ENCODE measurements at regions of chr2 and their contacts with region 1.

Region 1: GRCh38 chr2:37389989-37390765 is 45.7 kb downstream of the QPCT start:
- DNase-seq: peak; percentile 94
- ATAC-seq: peak; percentile 96
- H3K4me3 ChIP-seq: peak overlapping the region; percentile 19; the same call in 1 of the 2 replicates
- H3K27ac ChIP-seq: peak overlapping the region; percentile 63
- H3K4me1 ChIP-seq: peaks cover 30% of the 10 kb centered on the region
- H3K27me3 ChIP-seq: no peaks in the 10 kb centered on the region
- CTCF ChIP-seq: no peak
- EP300 ChIP-seq: peak; percentile 58 to 90; a peak in 3 of 4 replicates
- POLR2A ChIP-seq: no peak
- RAD21 ChIP-seq: peak; percentile 9; the same call in 1 of the 2 replicates

Region 2: DNA sequence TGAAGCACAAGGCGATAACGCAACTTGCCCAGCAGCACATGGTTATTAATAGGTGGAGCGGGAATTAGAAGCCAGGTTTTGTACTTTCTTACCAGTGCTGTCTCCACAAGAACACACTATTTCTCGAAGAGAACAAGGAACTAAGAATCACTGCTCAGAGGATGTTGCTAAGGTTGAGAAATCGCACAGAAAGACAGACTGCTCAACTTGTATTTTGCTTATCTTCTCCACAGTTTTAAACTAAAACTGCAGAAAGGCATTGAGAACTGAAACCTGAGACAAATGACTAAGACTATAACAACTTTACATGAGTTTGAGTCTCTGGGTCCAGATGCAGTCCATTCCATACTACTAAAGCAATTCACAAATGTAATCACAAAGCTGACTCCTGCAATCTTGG is 71.8 kb before region 1 on chr2:
- CTCF ChIA-PET with region 1: interaction called, 8 read pairs
- POLR2A ChIA-PET with region 1: no interaction called
- RAD21 ChIA-PET with region 1: interaction called, 9 read pairs
- SMC1A ChIA-PET with region 1: no interaction called
- in situ Hi-C with region 1: no loop called
- intact Hi-C with region 1: loop called (anchors 5 kb)
- DNase-seq: peak; percentile 53
- ATAC-seq: peak; percentile 80
- H3K4me3 ChIP-seq: peak overlapping the region; percentile 26; the same call in 1 of the 2 replicates
- H3K27ac ChIP-seq: peak overlapping the region; percentile 20; the same call in 1 of the 2 replicates
- H3K4me1 ChIP-seq: peaks cover 5% of the 10 kb centered on the region; the same call in 1 of the 2 replicates
- H3K27me3 ChIP-seq: no peaks in the 10 kb centered on the region
- CTCF ChIP-seq: no peak
- EP300 ChIP-seq: no peak
- POLR2A ChIP-seq: no peak
- RAD21 ChIP-seq: no peak

Region 3: DNA sequence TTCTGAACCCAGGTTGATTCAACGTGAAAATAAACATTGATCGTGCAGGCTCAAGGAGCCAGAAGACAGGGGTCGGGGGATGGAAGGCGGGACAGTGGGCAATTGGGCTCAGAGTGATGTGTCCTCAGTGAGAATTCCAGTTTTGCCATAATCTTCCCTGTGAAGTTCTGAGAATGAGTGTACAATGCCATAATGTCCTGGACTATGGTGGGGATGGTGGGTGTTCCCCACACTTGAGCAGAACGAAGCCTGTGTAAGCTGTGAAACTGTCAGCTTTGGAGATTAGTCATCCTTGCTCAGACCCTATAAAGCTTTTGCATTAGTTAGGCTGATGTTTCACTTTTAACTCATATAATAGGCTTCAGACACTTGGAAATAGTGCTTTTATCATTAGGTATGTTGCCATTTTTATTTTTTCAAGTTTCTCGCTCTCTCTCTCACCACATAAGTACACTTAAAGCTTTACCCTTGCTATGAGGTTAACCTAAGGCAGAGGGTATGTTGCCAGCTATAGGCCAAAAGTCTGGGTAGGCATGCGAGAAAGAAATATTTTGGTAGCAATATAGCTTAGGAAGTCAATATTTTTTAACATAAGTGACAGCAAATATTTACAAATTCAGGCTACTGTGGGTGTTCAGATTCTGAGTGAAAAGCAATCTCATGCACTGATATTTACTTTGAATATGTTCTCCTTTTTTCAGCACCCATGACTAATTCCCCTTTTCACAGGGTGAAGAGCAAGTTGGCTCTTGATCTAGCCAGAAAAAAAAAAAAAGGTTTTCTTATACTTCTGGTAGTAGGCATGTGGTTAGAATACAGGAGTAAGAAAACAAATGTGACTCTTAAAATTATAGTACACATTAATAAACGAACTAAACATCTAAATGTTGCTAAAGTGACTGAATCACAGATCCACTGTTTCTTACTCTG is 234.1 kb after region 1 on chr2:
- CTCF ChIA-PET with region 1: interaction called, 17 read pairs
- POLR2A ChIA-PET with region 1: no interaction called
- RAD21 ChIA-PET with region 1: no interaction called
- SMC1A ChIA-PET with region 1: interaction called, 5 read pairs
- in situ Hi-C with region 1: no loop called
- intact Hi-C with region 1: no loop called
- DNase-seq: peak; percentile 93
- ATAC-seq: peak; percentile 79
- H3K4me3 ChIP-seq: peak overlapping the region; percentile 24; the same call in 1 of the 2 replicates
- H3K27ac ChIP-seq: peak overlapping the region; percentile 97
- H3K4me1 ChIP-seq: peaks cover 54% of the 10 kb centered on the region
- H3K27me3 ChIP-seq: no peaks in the 10 kb centered on the region
- CTCF ChIP-seq: no peak
- EP300 ChIP-seq: peak; percentile 56 to 80
- POLR2A ChIP-seq: no peak
- RAD21 ChIP-seq: peak; percentile 1; the same call in 1 of the 2 replicates

Region 4: DNA sequence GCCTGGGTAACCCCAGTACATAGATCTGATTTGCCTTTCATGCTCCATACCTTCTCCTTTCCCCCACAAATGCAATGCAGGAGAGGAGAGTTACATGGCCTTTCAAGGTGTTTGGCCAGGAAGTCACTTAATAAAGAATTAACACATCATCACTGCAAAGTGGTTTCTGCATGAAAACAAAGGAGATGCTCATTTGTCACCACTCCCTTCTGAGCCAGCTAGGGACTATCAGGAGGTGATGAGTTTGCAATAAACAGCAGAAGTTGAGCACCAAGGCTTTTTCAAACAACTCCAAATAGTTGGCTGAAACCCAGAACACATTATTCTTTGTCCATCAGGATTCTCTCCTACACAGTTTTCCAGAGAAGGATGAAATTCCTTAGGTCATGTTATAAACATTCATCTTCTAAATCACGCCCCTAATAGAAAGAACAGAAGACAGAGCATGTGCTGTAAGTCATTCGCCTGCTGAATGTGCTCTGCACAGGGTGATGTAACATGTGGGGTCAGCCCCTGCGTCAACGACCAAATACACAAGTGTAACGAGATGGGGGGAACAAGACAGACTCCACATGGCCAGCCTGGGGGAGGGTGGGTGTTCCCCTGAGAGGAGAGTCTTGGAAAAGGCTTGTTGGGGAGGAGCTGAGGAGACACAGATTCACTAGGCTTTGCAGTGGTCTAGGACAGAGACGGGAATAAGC is 447.6 kb after region 1 on chr2:
- CTCF ChIA-PET with region 1: interaction called, 104 read pairs
- POLR2A ChIA-PET with region 1: no interaction called
- RAD21 ChIA-PET with region 1: interaction called, 78 read pairs
- SMC1A ChIA-PET with region 1: interaction called, 163 read pairs
- in situ Hi-C with region 1: no loop called
- intact Hi-C with region 1: no loop called
- DNase-seq: no peak
- ATAC-seq: no peak
- H3K4me3 ChIP-seq: no peak overlapping the region
- H3K27ac ChIP-seq: no peak overlapping the region
- H3K4me1 ChIP-seq: peaks cover 4% of the 10 kb centered on the region; the same call in 1 of the 2 replicates
- H3K27me3 ChIP-seq: no peaks in the 10 kb centered on the region
- CTCF ChIP-seq: no peak
- EP300 ChIP-seq: no peak
- POLR2A ChIP-seq: no peak
- RAD21 ChIP-seq: no peak

Region 5: DNA sequence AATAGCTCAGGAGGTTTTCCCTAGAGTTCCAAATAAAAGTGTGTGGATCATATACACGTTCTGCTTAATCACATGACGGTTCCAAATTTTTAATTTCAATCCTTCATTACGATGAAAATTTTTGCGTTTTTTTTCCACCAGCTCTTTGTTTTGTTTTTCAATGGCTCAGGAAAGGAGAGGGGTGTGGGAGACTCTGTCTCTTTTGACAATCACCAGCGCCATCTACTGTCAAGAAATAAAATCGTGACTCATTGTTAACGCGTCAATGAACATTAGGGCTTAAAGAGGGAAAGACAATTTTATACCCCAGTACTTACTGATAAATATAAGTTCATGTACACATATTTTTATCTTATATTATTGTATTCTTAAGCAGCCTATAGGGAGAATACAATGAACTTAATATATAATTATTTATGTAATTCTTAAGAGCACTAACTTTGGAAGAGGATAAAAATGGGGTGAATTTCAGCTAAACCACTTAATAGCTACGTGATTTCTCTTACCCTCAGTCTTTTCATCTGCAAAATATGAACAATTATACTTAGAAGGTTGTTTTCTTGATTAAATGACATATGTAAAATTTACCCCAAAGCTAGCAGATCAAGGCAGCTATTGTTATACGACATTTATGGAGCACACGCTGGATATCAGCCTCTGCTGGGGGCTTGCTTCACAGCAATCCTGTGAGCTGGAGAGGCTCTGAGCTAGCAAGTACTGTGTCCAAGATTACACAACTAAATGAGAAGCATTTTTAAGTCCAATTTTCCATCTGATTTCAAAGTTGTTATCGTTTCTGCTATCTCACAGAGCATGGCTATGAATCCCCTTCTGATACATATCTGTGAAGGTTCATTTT is 487.5 kb after region 1 on chr2:
- CTCF ChIA-PET with region 1: interaction called, 267 read pairs
- POLR2A ChIA-PET with region 1: no interaction called
- RAD21 ChIA-PET with region 1: interaction called, 156 read pairs
- SMC1A ChIA-PET with region 1: interaction called, 211 read pairs
- in situ Hi-C with region 1: loop called (anchors 5 kb)
- intact Hi-C with region 1: no loop called
- DNase-seq: no peak
- ATAC-seq: peak; percentile 77
- H3K4me3 ChIP-seq: no peak overlapping the region
- H3K27ac ChIP-seq: no peak overlapping the region
- H3K4me1 ChIP-seq: peaks cover 8% of the 10 kb centered on the region
- H3K27me3 ChIP-seq: peaks cover 0 to 2% of the 10 kb centered on the region in 2 experiments; a peak in 2 of 4 replicates
- CTCF ChIP-seq: peak; percentile 44 to 64 (median 63); a peak in 5 of 6 replicates
- EP300 ChIP-seq: no peak
- POLR2A ChIP-seq: no peak
- RAD21 ChIP-seq: peak; percentile 91

Region 6: GRCh38 chr2:38115216-38116032 is 725.2 kb after region 1 on chr2:
- CTCF ChIA-PET with region 1: interaction called, 19 read pairs
- POLR2A ChIA-PET with region 1: no interaction called
- RAD21 ChIA-PET with region 1: interaction called, 3 read pairs
- SMC1A ChIA-PET with region 1: no interaction called
- in situ Hi-C with region 1: no loop called
- intact Hi-C with region 1: loop called (anchors 5 kb)
- DNase-seq: peak; percentile 55
- ATAC-seq: peak; percentile 96
- H3K4me3 ChIP-seq: no peak overlapping the region
- H3K27ac ChIP-seq: no peak overlapping the region; the same call in 1 of the 2 replicates
- H3K4me1 ChIP-seq: peaks cover 9% of the 10 kb centered on the region
- H3K27me3 ChIP-seq: no peaks in the 10 kb centered on the region
- CTCF ChIP-seq: peak; percentile 91 to 97 (median 96)
- EP300 ChIP-seq: no peak
- POLR2A ChIP-seq: no peak
- RAD21 ChIP-seq: peak; percentile 98

Region 7: DNA sequence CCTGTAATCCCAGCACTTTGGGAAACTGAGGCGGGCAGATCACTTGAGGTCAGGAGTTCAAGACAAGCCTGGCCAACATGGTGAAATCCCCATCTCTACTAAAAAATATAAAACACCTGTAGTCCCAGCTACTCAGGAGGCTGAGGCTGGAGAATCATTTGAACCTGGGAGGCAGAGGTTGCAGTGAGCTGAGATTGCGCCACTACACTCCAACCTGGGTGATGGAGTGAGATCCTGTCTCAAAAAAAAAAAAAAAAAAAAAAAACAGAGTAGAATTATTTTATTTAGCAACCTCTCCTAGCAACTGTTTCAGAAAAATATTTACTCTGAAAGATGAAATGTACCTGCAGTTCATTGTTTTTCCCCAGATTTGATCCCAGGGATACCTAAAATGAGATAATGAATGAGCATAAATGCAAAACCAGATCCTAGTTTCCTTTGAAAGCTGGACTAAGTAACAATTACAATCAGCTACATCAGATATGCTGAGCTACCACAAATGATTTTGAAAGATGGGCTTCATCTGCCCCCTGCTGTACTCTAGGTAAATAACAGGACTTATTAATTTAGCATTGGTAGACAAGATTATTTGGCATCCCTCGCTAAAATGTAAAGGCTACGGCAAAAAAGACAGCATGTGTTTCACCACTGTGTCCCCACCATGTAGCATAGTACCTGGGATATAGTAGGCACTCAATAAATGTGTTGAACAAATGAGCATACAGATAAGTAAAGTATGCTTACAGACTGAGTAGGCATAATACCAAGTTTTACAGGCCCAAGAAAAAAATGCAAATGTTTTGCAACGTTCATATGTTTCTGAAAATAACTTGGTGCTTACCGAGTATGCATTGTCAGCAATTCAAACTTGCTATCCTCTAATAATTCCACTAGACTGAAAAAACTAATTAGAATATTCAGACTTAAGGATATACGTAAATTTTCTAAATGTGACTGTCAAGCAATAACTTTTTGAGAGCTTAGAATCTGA is 884.4 kb after region 1 on chr2:
- CTCF ChIA-PET with region 1: interaction called, 31 read pairs
- POLR2A ChIA-PET with region 1: no interaction called
- RAD21 ChIA-PET with region 1: interaction called, 29 read pairs
- SMC1A ChIA-PET with region 1: interaction called, 15 read pairs
- in situ Hi-C with region 1: loop called (anchors 5 kb)
- intact Hi-C with region 1: no loop called
- DNase-seq: peak; percentile 65
- ATAC-seq: peak; percentile 89
- H3K4me3 ChIP-seq: no peak overlapping the region
- H3K27ac ChIP-seq: no peak overlapping the region
- H3K4me1 ChIP-seq: no peaks in the 10 kb centered on the region
- H3K27me3 ChIP-seq: no peaks in the 10 kb centered on the region
- CTCF ChIP-seq: peak; percentile 53 to 79 (median 63); a peak in 5 of 6 replicates
- EP300 ChIP-seq: no peak
- POLR2A ChIP-seq: no peak
- RAD21 ChIP-seq: peak; percentile 93